ENCODE measurements at regions of chr6 and their contacts with region 1.

Region 1: GRCh38 chr6:30742316-30743098 is at the start of gene FLOT1:
- DNase-seq: peak; percentile 97 to 99
- H3K4me3 ChIP-seq: peak within 1 kb of the TSS; percentile 94 to 95
- H3K27ac ChIP-seq: peak within 1 kb of the TSS; percentile 97 to 98
- H3K4me1 ChIP-seq: peaks cover 0 to 52% (median 35%) of the 10 kb centered on the region in 4 donors
- H3K27me3 ChIP-seq: no peaks in the 10 kb centered on the region
- CTCF ChIP-seq: no peak

Region 2: GRCh38 chr6:30781743-30782424 is 39.4 kb after region 1 on chr6:
- intact Hi-C with region 1: loop called (anchors 1 kb)
- DNase-seq: peak; percentile 94 to 98
- H3K4me3 ChIP-seq: no peak overlapping the region
- H3K27ac ChIP-seq: peak overlapping the region; percentile 78 to 89
- H3K4me1 ChIP-seq: peaks cover 4 to 49% (median 42%) of the 10 kb centered on the region in 4 donors
- H3K27me3 ChIP-seq: no peaks in the 10 kb centered on the region
- CTCF ChIP-seq: peak in 1 of 2 experiments; percentile 6

Region 3: GRCh38 chr6:30821862-30822782 is 79.6 kb after region 1 on chr6:
- intact Hi-C with region 1: loop called (anchors 5 kb)
- DNase-seq: no peak
- H3K4me3 ChIP-seq: no peak overlapping the region
- H3K27ac ChIP-seq: peak overlapping the region; percentile 29 to 48
- H3K4me1 ChIP-seq: peaks cover 0 to 44% (median 17%) of the 10 kb centered on the region in 4 donors
- H3K27me3 ChIP-seq: no peaks in the 10 kb centered on the region
- CTCF ChIP-seq: peak; percentile 35 to 40

Region 4: DNA sequence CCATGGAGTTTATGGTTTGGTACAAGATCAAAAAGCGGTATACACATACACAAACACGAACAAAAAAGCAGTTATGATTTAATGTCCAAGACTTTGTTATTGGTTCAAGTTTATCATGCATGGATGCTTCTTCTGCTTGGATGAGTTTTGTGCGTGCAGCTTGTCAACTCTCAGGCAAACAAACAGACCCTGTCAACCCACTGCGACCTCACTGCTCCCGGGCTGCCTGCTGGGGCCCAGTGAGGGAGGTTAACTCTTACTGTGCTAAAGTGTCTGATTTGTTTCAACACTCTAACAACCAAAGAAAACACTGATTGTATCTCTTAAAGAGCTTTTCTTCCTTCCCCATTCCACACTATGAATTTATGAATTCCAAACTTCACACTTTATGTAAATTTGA is 115.0 kb after region 1 on chr6:
- intact Hi-C with region 1: no loop called
- DNase-seq: no peak
- H3K4me3 ChIP-seq: no peak overlapping the region
- H3K27ac ChIP-seq: no peak overlapping the region
- H3K4me1 ChIP-seq: no peaks in the 10 kb centered on the region
- H3K27me3 ChIP-seq: no peaks in the 10 kb centered on the region
- CTCF ChIP-seq: no peak

Region 5: DNA sequence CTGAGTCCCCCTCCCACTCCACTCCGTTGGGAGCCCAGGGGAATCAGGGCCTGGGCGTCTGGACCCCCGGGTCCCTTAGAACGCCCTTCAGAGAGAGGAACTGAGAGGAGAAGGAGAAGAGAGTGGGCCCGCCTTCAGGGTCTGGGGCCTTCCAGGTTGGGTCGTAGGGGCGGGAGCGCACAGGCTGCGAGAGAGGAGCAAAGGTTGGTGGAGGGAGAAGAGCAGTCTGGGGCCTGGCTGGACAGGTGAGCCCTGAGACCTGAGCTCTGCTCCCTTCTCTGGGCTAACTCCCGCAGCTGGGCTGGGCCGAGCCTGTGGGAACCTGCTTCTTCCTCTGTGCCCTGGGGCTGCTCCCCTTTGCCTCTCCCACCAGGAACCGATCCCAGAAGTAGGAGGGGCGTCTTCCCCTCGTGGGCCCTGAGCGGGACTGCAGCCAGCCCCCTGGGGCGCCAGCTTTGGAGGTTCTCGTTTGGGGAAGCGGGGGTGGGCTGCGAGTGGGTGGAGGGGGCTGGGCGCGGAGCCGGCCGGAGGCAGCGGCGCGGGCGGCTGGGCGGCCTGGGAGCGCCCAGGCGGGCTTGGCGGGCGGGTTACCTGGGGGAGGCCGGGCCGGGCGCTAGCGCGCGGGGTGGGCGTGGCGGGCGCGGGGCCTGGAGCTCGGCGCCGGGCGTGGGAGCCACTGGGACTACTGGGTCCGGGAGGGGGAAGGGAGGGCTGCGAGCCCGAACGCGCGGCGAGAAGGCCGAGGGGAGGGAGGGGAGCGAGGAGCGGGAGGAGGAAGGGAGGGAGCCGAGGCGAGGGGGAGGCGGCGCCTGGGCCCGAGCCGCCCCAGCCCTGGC is 141.4 kb after region 1 on chr6 and contains the start of gene DDR1:
- intact Hi-C with region 1: loop called (anchors 5 kb)
- DNase-seq: peak; percentile 60 to 92
- H3K4me3 ChIP-seq: peak within 1 kb of the TSS; percentile 87 to 88
- H3K27ac ChIP-seq: peak within 1 kb of the TSS; percentile 93 to 98
- H3K4me1 ChIP-seq: peaks cover 0 to 69% (median 40%) of the 10 kb centered on the region in 4 donors
- H3K27me3 ChIP-seq: no peaks in the 10 kb centered on the region
- CTCF ChIP-seq: no peak

Region 6: GRCh38 chr6:31087494-31088089 is 345.1 kb after region 1 on chr6:
- intact Hi-C with region 1: loop called (anchors 10 kb)
- DNase-seq: peak; percentile 85 to 87
- H3K4me3 ChIP-seq: no peak overlapping the region
- H3K27ac ChIP-seq: no peak overlapping the region
- H3K4me1 ChIP-seq: peaks cover 0 to 21% (median 5%) of the 10 kb centered on the region in 4 donors
- H3K27me3 ChIP-seq: no peaks in the 10 kb centered on the region
- CTCF ChIP-seq: peak; percentile 70 to 80

Measured in tibial artery (tissue), 4 donors.